Upper lobe of right lung (tissue), 1 donor: ENCODE measurements at regions of chr2 and their contacts with region 1.

Region 1: GRCh38 chr2:16617282-16618261 is 48.1 kb downstream of the CYRIA start:
- DNase-seq: no peak
- ATAC-seq: peak; percentile 60
- H3K4me3 ChIP-seq: no peak overlapping the region
- H3K27ac ChIP-seq: peak overlapping the region; percentile 14
- H3K4me1 ChIP-seq: peaks cover 49% of the 10 kb centered on the region
- H3K27me3 ChIP-seq: no peaks in the 10 kb centered on the region
- CTCF ChIP-seq: peak; percentile 43

Region 2: GRCh38 chr2:16507655-16508489 is 109.7 kb before region 1 on chr2:
- intact Hi-C with region 1: no loop called
- DNase-seq: peak; percentile 73
- ATAC-seq: peak; percentile 91
- H3K4me3 ChIP-seq: peak overlapping the region; percentile 40
- H3K27ac ChIP-seq: no peak overlapping the region
- H3K4me1 ChIP-seq: peaks cover 6% of the 10 kb centered on the region
- H3K27me3 ChIP-seq: peaks cover 33% of the 10 kb centered on the region
- CTCF ChIP-seq: peak; percentile 64

Region 3: DNA sequence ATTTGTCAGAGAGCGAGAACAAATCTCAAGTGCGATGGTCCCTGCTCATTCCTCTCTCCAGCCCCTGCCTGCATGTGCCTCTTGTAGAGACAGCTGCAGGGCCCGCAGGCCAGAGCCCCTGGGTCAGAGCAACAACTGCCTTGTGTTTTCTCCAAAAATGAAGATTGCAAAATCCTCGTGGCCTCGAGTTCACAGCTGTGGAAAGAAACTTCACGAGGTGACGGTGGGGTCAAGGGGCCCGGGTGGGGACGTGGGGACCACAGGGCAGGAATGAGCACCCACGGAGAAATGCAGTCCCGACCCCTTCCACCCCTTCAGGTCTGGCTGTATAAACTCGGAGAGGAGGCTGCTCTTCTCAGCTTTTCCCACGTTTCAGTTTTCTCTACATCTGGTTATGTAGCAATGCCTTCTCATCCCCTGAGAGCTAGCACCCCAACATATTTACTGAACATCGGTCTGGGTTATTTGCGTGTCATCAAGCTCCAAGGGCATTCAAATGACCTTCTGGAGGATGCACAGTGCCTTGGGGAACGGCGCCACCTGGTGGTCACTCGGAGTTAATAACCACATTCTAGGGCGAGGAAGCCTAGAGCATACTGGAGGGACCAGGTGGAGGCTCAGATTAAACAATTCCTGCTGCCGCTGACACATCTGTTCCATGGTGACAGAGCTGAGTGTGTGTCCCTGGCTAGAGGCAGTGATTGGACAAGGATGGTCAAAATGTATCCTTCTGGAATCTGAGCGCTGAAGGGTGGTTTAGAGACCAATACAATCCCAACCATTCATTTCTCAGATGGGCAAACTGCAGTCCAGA is 139.5 kb after region 1 on chr2:
- intact Hi-C with region 1: loop called (anchors 5 kb)
- DNase-seq: peak; percentile 85
- ATAC-seq: peak; percentile 96
- H3K4me3 ChIP-seq: no peak overlapping the region
- H3K27ac ChIP-seq: peak overlapping the region; percentile 45
- H3K4me1 ChIP-seq: no peaks in the 10 kb centered on the region
- H3K27me3 ChIP-seq: no peaks in the 10 kb centered on the region
- CTCF ChIP-seq: peak; percentile 87